ENCODE measurements at regions of chr22 and their contacts with region 1.

Region 1: DNA sequence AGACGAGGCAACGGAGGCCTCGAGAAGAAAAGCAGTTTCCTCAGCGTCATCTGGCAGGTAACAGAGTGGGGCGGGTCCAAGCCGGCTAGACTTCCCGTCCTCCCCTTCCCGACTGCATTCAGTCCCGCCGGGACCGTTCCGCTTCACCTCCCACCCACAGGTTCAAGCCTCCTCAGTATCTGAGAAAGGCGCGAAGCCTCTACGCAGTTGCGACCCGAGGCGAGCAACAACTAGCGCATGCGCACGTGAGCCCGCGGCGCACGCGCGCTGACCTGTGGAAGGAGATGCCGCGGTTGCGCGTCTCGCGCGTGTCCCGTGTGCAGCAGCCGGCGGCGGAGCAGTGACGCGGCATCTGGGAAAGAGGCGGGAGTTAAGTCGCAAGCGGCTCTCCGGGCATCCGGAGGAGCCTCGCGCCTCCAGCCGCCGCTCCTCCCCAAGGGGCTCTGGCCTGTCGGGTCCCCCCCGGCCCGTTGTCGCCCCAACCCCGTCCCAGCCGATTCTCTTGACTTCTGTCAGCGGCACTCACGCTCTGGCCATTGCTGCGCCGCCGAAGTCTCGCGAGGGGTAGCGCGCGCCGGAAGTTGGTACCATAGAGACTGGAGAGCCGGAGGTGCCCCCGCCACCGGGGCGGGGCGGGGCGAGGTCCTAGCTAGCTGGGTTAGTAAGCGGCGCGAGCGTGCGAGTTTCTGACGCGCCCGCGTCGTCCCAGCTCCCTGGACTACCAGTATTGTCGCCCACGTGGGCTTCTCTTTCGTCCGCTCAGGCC is at the start of gene THAP7:
- DNase-seq: peak; percentile 96
- H3K4me3 ChIP-seq: peak within 1 kb of the TSS; percentile 82 to 96
- H3K27ac ChIP-seq: peak within 1 kb of the TSS; percentile 96 to 97
- H3K4me1 ChIP-seq: peaks cover 12 to 37% of the 10 kb centered on the region in 2 experiments; a peak in 3 of 4 replicates
- H3K27me3 ChIP-seq: no peaks in the 10 kb centered on the region
- CTCF ChIP-seq: no peak
- EP300 ChIP-seq: no peak
- RAD21 ChIP-seq: no peak
- polyA plus RNA-seq, gene THAP7: 26.3 and 32.0 TPM in 2 replicates

Region 2: DNA sequence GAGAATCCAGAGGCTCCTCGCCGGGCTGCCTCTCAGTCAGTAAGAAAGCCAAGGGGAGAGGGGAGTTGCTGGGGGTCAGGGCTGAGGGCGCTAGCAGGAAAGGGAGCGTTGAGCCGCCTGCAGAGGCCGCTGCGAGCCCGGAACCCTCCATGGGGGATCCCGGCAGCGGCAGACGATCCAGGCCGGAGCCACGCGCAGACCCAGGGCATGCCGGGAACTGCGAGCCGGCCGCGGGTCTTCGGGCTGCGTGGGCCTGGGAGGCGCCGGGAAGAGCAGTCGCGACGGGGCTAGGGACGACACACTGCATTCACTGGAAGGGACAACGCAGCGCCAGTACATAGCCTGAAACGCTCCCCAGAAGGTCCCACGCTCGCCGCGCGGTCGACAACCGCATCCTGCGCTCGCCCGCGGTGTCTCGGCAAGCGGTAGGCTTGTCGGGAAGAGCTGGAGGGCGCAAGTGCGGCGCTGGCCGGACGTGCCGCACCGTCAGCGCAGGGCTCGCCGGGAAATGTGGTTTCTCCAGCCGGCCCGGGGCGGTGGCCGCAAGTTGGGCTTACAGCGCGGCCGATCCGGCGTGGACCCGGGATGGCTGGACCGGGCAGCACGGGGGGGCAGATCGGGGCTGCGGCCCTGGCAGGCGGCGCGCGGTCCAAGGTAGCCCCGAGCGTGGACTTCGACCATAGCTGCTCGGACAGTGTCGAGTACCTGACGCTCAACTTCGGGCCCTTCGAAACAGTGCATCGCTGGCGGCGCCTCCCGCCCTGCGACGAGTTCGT is 19.8 kb before region 1 on chr22 and contains the start of gene LZTR1:
- CTCF ChIA-PET with region 1: no interaction called
- POLR2A ChIA-PET with region 1: interaction called, 12 read pairs
- DNase-seq: peak; percentile 94
- H3K4me3 ChIP-seq: peak within 1 kb of the TSS; percentile 71 to 97
- H3K27ac ChIP-seq: peak within 1 kb of the TSS; percentile 77 to 98
- H3K4me1 ChIP-seq: peaks cover 6 to 24% of the 10 kb centered on the region in 2 experiments; a peak in 2 of 4 replicates
- H3K27me3 ChIP-seq: no peaks in the 10 kb centered on the region
- CTCF ChIP-seq: peak; percentile 62
- EP300 ChIP-seq: no peak; a peak in 1 of 4 replicates
- RAD21 ChIP-seq: peak; percentile 54
- polyA plus RNA-seq, gene LZTR1: 37.7 and 41.5 TPM in 2 replicates

Region 3: GRCh38 chr22:20989323-20990138 is 12.2 kb before region 1 on chr22:
- CTCF ChIA-PET with region 1: interaction called, 6 read pairs
- POLR2A ChIA-PET with region 1: interaction called, 18 read pairs
- DNase-seq: no peak
- H3K4me3 ChIP-seq: no peak overlapping the region
- H3K27ac ChIP-seq: no peak overlapping the region
- H3K4me1 ChIP-seq: no peaks in the 10 kb centered on the region
- H3K27me3 ChIP-seq: no peaks in the 10 kb centered on the region
- CTCF ChIP-seq: no peak
- EP300 ChIP-seq: no peak
- RAD21 ChIP-seq: no peak

Region 4: GRCh38 chr22:21014202-21014725 is 12.5 kb after region 1 on chr22:
- CTCF ChIA-PET with region 1: interaction called, 9 read pairs
- POLR2A ChIA-PET with region 1: interaction called, 34 read pairs
- DNase-seq: peak; percentile 96
- H3K4me3 ChIP-seq: peak overlapping the region; percentile 76 to 78
- H3K27ac ChIP-seq: peak overlapping the region; percentile 71 to 97
- H3K4me1 ChIP-seq: peaks cover 15 to 45% of the 10 kb centered on the region in 2 experiments; a peak in 3 of 4 replicates
- H3K27me3 ChIP-seq: no peaks in the 10 kb centered on the region
- CTCF ChIP-seq: no peak
- EP300 ChIP-seq: peak in 1 of 2 experiments; percentile 42; a peak in 1 of 4 replicates
- RAD21 ChIP-seq: no peak; the same call in 1 of the 2 replicates

Region 5: GRCh38 chr22:21102659-21103267 is 101.0 kb after region 1 on chr22:
- CTCF ChIA-PET with region 1: interaction called, 11 read pairs
- POLR2A ChIA-PET with region 1: no interaction called
- DNase-seq: peak; percentile 88
- H3K4me3 ChIP-seq: peak overlapping the region; percentile 30 to 51; a peak in 2 of 4 replicates
- H3K27ac ChIP-seq: no peak overlapping the region
- H3K4me1 ChIP-seq: peaks cover 8 to 11% of the 10 kb centered on the region in 2 experiments; a peak in 2 of 4 replicates
- H3K27me3 ChIP-seq: no peaks in the 10 kb centered on the region; the same call in 1 of the 2 replicates
- CTCF ChIP-seq: peak; percentile 82
- EP300 ChIP-seq: no peak
- RAD21 ChIP-seq: peak; percentile 63